ENCODE measurements at regions of chr6 and their contacts with region 1.

Region 1: GRCh38 chr6:71383901-71384489 is 95.4 kb downstream of the OGFRL1 start:
- DNase-seq: no peak
- H3K4me3 ChIP-seq: no peak overlapping the region
- H3K27ac ChIP-seq: no peak overlapping the region
- H3K4me1 ChIP-seq: peaks cover 0 to 25% (median 6%) of the 10 kb centered on the region in 4 donors
- H3K27me3 ChIP-seq: no peaks in the 10 kb centered on the region
- CTCF ChIP-seq: peak; percentile 47 to 67 (median 55)
- EP300 ChIP-seq: no peak
- POLR2A ChIP-seq: no peak

Region 2: GRCh38 chr6:70629929-70630328 is 754.1 kb before region 1 on chr6:
- in situ Hi-C with region 1: no loop called
- intact Hi-C with region 1: no loop called
- DNase-seq: no peak
- H3K4me3 ChIP-seq: no peak overlapping the region
- H3K27ac ChIP-seq: no peak overlapping the region
- H3K4me1 ChIP-seq: peaks cover 0 to 4% (median 0%) of the 10 kb centered on the region in 4 donors
- H3K27me3 ChIP-seq: no peaks in the 10 kb centered on the region
- CTCF ChIP-seq: no peak
- EP300 ChIP-seq: no peak
- POLR2A ChIP-seq: no peak

Region 3: DNA sequence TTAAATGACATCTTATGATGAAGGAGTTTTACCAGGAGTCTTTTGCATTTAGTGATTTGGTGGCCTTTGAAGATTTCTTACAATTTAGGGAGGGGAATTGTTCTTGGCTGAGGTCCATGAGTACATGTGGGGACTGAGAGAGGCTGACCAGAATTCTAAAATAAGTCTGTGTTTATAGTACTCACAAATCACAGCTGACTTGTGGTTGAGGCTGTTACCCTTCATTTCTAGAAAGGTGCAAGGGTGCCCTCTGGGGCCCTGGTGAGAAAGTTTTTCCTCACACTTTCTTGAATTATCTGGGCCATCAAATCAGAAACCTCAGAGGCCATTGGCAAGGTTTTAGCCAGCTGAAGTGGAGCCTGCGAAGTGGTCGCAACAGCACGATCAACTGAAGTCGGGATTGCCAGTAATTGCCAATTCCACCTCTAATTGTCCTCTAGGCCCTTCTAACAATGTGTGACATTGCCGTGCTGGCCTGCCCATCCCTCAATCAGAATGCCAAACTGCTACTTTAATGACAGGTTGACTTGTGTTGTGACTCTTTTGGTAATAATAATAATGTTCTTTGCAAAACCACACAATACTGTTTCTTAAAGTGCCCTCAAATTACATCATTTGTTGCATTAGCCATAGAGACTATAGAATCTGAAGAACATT is 126.2 kb after region 1 on chr6:
- in situ Hi-C with region 1: loop called (anchors 10 kb)
- intact Hi-C with region 1: loop called (anchors 5 kb)
- DNase-seq: peak; percentile 27
- H3K4me3 ChIP-seq: no peak overlapping the region
- H3K27ac ChIP-seq: peak overlapping the region in 1 of 4 donors; percentile 22
- H3K4me1 ChIP-seq: peaks cover 0 to 8% (median 2%) of the 10 kb centered on the region in 4 donors
- H3K27me3 ChIP-seq: no peaks in the 10 kb centered on the region
- CTCF ChIP-seq: peak; percentile 32 to 57 (median 43)
- EP300 ChIP-seq: no peak
- POLR2A ChIP-seq: no peak

Region 4: DNA sequence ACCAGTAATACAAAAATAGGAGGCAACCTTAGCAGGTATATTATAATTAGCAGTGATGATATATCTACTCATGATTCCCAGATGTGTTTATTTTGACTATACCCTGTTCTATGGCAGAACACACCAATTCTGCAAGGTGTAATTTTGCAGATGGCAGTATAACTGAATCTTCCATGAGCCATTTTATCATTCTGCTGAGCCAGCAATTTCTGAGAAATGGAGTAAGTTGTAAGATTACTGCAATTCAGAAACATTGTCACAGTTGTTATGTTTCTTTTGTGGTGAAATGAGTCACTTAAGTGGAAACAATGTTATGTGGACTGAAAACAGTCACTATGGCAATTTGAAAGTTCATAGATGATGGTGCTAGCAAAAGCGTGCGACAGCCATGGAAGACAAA is 438.6 kb after region 1 on chr6:
- in situ Hi-C with region 1: no loop called
- intact Hi-C with region 1: no loop called
- DNase-seq: no peak
- H3K4me3 ChIP-seq: no peak overlapping the region
- H3K27ac ChIP-seq: no peak overlapping the region
- H3K4me1 ChIP-seq: no peaks in the 10 kb centered on the region
- H3K27me3 ChIP-seq: no peaks in the 10 kb centered on the region
- CTCF ChIP-seq: no peak
- EP300 ChIP-seq: no peak
- POLR2A ChIP-seq: no peak

Region 5: DNA sequence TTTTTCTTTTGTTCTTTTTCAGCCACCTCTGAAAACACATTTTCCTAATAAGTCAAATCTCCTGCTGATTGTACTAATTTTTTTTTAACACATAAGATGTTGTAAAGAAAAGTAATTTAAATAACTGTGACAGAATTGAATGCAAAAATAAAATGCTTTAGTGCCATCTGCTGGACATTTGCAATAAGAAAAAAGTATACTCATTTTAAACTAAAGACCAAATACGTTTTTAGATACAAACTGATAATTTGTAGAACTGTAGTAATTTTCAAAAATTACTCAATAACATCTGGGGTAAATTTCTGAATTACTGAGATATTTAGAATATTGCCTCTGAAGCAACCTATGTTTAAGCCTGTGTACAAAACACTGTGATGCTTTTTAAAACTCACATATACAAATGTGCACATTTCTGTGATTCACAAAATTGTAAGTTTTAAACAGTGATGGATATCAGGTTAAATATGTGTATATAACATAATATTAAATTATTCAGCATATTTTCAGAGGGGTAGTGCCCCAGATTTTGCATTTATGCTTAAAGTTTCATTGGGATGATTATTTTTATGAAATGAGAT is 701.1 kb after region 1 on chr6:
- in situ Hi-C with region 1: loop called in 2 of 4 experiments (anchors 25 kb)
- intact Hi-C with region 1: no loop called
- DNase-seq: no peak
- H3K4me3 ChIP-seq: no peak overlapping the region
- H3K27ac ChIP-seq: no peak overlapping the region
- H3K4me1 ChIP-seq: no peaks in the 10 kb centered on the region
- H3K27me3 ChIP-seq: no peaks in the 10 kb centered on the region
- CTCF ChIP-seq: peak; percentile 31 to 53 (median 40)
- EP300 ChIP-seq: no peak
- POLR2A ChIP-seq: no peak